Breast epithelium (tissue), 4 donors: ENCODE measurements at regions of chr15 and their contacts with region 1.

Region 1: GRCh38 chr15:63870403-63871209 is 36.9 kb upstream of the HERC1 start:
- DNase-seq: no peak
- H3K4me3 ChIP-seq: no peak overlapping the region
- H3K27ac ChIP-seq: no peak overlapping the region
- H3K4me1 ChIP-seq: no peaks in the 10 kb centered on the region
- H3K27me3 ChIP-seq: no peaks in the 10 kb centered on the region
- CTCF ChIP-seq: no peak
- POLR2A ChIP-seq: no peak

Region 2: DNA sequence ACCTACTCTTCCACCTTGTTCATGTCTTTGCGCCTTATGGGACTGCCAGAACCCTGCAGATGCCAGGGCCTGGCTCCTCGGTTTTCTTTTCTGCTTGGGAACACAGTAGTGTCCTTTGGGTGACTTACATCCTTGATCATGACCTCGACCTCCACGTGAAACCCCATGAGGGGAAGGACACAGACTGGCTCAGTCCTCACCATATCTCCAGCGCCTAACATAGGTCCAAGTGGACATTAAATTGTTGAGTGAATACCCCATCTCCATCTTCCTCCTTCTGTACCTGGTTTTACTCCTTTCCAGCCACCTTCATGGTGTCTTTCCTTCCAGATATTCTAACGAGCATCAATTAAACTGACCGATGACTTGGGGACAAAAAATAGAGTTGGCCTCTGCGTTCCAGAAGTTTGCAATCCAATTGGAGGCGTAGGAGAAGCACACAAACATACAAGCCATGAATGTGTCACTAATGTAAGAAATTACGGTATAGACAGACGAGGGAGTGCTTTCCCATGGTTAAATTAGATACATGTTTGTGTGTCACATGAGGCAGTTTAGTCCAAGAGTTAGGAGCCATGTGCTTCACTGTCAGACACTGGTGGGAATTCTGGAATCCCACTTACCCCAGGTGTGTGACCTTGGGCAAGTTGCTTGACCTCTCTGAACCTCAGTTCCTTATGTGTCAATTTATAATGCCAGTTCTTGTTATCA is 36.0 kb before region 1 on chr15:
- intact Hi-C with region 1: loop called (anchors 1 kb)
- DNase-seq: no peak
- H3K4me3 ChIP-seq: peak overlapping the region; percentile 79 to 94 (median 89)
- H3K27ac ChIP-seq: peak overlapping the region; percentile 95
- H3K4me1 ChIP-seq: peaks cover 0 to 11% of the 10 kb centered on the region in 2 donors
- H3K27me3 ChIP-seq: no peaks in the 10 kb centered on the region
- CTCF ChIP-seq: no peak
- POLR2A ChIP-seq: no peak

Region 3: DNA sequence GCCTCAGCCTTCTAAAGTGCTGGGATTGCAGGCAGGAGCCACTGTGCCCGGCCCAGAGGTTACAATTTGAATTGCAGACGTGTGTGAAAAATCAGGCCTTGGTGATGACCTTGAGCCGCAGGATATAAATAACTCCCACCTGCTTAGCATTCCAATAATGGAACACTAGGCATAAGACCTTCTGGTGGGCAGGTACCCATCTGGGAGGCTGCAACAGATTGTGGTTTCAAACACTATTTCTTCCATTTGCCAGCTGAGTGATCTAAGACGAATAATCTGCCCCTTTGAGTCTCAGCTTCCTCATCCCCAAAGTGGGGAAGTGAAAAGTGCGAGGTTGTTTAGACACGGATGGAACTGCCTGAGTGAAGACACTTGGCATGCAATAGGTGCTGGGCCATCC is 10.8 kb after region 1 on chr15:
- intact Hi-C with region 1: loop called (anchors 1 kb)
- DNase-seq: no peak
- H3K4me3 ChIP-seq: no peak overlapping the region
- H3K27ac ChIP-seq: no peak overlapping the region
- H3K4me1 ChIP-seq: no peaks in the 10 kb centered on the region
- H3K27me3 ChIP-seq: no peaks in the 10 kb centered on the region
- CTCF ChIP-seq: no peak
- POLR2A ChIP-seq: no peak

Region 4: DNA sequence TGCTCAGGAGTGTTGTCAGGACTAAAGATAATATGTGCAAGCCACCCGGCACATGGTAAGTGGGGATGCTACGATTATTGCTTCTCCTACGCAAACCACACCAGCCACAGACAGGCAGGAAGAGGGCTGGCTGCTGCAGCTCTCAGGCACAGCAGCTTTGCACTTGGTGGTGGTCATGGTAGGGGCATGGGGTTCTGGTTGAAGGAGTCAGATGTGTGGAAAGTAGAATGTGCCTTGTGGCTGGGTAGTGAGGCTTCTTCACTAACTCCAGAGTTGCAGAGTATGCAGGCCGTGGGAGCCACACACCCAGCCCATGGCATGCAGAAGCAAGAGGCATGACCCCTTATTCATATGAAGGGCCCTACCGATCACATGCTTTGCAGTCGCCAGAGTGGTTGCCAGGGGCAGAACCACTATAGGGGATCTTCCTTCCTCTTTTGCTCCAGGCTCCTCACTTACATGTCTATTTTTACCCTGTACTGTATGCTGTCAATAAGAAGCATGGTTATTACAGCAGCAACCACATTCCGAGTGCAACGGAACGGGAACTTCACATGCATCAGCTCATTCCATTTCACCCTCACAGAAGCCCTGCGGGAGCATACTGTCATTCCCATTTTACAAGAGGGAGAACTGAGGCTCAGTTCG is 22.3 kb after region 1 on chr15:
- intact Hi-C with region 1: no loop called
- DNase-seq: peak in 1 of 2 donors; percentile 25
- H3K4me3 ChIP-seq: no peak overlapping the region
- H3K27ac ChIP-seq: no peak overlapping the region
- H3K4me1 ChIP-seq: peaks cover 0 to 4% of the 10 kb centered on the region in 2 donors
- H3K27me3 ChIP-seq: no peaks in the 10 kb centered on the region
- CTCF ChIP-seq: no peak
- POLR2A ChIP-seq: no peak

Region 5: GRCh38 chr15:64224511-64224910 is 353.9 kb after region 1 on chr15:
- intact Hi-C with region 1: no loop called
- DNase-seq: no peak
- H3K4me3 ChIP-seq: no peak overlapping the region
- H3K27ac ChIP-seq: no peak overlapping the region
- H3K4me1 ChIP-seq: no peaks in the 10 kb centered on the region
- H3K27me3 ChIP-seq: no peaks in the 10 kb centered on the region
- CTCF ChIP-seq: no peak
- POLR2A ChIP-seq: no peak

Region 6: DNA sequence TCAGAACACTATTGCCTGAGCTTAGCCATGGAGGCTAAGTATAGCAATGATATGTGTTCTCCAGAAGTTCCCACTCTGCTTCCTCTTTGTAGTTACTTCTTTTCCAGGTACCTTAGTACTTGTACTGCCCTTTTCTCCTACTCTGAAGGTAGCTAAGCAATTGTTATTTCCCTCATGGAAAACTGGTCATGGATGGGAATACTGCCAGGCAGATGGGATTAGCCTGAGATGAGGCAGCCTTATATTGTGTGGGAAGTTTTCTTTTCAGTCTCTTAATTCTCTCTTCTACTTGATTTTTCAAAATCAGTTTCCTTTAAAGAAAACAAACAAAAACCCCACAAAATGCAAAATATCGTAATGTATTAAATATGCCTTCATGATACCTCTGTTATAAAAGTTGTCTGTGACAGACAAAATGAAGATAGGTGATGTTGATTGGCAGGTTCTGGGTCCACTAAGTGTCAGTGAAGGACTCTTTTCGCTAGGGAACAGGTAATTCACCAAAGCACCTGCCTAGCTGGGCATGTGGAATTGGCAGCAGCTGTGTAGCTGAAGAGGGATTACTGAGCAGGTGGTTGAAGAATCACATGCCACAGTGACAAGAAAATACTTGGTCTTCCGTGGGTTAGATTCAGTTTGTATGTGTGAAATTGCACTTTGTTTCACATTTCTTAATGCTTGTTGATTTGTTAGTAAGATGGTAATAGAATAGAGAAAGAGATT is 593.8 kb after region 1 on chr15:
- intact Hi-C with region 1: no loop called
- DNase-seq: no peak
- H3K4me3 ChIP-seq: no peak overlapping the region
- H3K27ac ChIP-seq: no peak overlapping the region
- H3K4me1 ChIP-seq: peaks cover 3 to 8% of the 10 kb centered on the region in 2 donors
- H3K27me3 ChIP-seq: no peaks in the 10 kb centered on the region
- CTCF ChIP-seq: no peak
- POLR2A ChIP-seq: no peak